T-cell (primary cell): ENCODE measurements at regions of chr6 and their contacts with region 1.

Region 1: DNA sequence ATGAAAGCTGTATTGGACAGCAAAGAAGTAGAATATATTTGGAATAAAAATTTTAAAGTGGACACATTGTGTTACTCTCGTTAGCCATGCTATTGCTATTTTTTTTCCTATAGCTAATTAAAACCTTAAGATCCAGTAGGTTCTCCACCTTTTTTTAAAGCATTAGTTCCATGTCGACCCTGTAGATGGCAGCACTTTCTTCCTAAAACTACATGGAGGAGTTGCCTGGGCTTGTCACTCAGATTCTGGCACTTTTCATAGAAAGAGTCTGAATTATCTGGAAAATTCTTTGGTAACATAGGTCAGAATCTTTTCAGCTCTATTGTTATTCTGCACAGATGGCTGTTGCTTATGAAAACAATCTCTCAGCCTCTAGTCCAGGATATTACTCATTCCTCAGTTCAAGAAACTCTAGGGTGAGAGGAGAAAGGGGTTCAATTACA is 42.0 kb upstream of the ESR1 start:
- DNase-seq: peak in 18 of 35 experiments; percentile 3 to 62 (median 14)
- ATAC-seq: peak; percentile 43 to 53 (median 46)
- H3K4me3 ChIP-seq: no peak overlapping the region
- H3K4me3 Mint-ChIP-seq: no peak overlapping the region
- H3K27ac ChIP-seq: no peak overlapping the region
- H3K27ac Mint-ChIP-seq: no peak overlapping the region
- H3K4me1 ChIP-seq: peaks cover 0 to 2% of the 10 kb centered on the region in 2 experiments
- H3K4me1 Mint-ChIP-seq: peaks cover 9 to 17% (median 15%) of the 10 kb centered on the region in 3 donors
- H3K27me3 ChIP-seq: no peaks in the 10 kb centered on the region
- H3K27me3 Mint-ChIP-seq: peaks cover 4 to 8% of the 10 kb centered on the region in 2 donors

Region 2: GRCh38 chr6:151546941-151547659 is 218.4 kb before region 1 on chr6:
- CTCF ChIA-PET with region 1: no interaction called
- POLR2A ChIA-PET with region 1: no interaction called
- DNase-seq: no peak
- ATAC-seq: no peak
- H3K4me3 ChIP-seq: no peak overlapping the region
- H3K4me3 Mint-ChIP-seq: no peak overlapping the region
- H3K27ac ChIP-seq: no peak overlapping the region
- H3K27ac Mint-ChIP-seq: no peak overlapping the region
- H3K4me1 ChIP-seq: no peaks in the 10 kb centered on the region
- H3K4me1 Mint-ChIP-seq: no peaks in the 10 kb centered on the region
- H3K27me3 ChIP-seq: peaks cover 0 to 10% of the 10 kb centered on the region in 2 experiments
- H3K27me3 Mint-ChIP-seq: peaks cover 4 to 9% of the 10 kb centered on the region in 2 donors

Region 3: DNA sequence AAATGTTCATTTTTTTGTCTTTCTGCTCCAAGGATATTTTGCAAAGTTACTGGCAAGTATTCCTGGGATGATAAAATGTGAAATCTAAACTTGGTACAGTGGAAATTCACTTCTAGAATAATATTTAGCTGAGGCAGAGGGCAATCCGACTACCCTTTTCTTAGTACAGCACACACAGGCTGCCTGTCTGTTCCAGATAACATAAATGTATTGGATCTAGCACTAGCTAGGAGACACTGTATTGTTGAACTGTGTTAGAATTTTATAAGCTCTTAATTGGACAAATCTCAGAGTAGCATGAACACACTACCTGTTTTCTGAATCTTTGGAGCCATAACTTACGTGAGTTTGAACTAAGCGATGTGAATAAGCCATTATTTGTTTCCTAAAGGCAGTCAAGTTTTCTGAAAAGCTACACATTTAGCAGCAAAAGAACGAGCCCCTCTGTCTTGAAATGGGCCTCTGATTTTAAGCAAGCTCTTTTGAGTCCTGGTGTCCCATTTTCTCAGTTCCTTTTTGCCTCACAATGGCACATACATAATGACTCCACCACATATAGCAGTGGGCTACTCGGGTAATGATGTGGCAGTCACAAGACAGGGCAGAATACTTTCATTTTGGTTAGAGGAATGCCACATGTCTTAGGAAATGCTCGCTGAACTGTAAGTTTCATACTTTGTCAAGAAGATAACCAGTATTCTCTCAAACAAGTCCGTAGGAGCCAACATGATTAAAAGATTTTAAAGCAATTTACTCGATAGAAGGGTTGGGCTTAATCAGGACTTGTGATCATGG is 74.5 kb before region 1 on chr6:
- CTCF ChIA-PET with region 1: interaction called in 1 of 2 experiments, 19 read pairs
- POLR2A ChIA-PET with region 1: no interaction called
- DNase-seq: peak in 7 of 35 experiments; percentile 4 to 57 (median 8)
- ATAC-seq: peak; percentile 65 to 85 (median 73)
- H3K4me3 ChIP-seq: peak overlapping the region; percentile 33 to 40
- H3K4me3 Mint-ChIP-seq: peak overlapping the region; percentile 68 to 83 (median 83)
- H3K27ac ChIP-seq: peak overlapping the region; percentile 30
- H3K27ac Mint-ChIP-seq: peak overlapping the region; percentile 82 to 94
- H3K4me1 ChIP-seq: peaks cover 0 to 2% of the 10 kb centered on the region in 2 experiments
- H3K4me1 Mint-ChIP-seq: peaks cover 18 to 35% (median 21%) of the 10 kb centered on the region in 3 donors
- H3K27me3 ChIP-seq: no peaks in the 10 kb centered on the region
- H3K27me3 Mint-ChIP-seq: peaks cover 0 to 2% of the 10 kb centered on the region in 2 donors